Left ventricle myocardium inferior (tissue), 1 donor: ENCODE measurements at regions of chr20 and their contacts with region 1.

Region 1: DNA sequence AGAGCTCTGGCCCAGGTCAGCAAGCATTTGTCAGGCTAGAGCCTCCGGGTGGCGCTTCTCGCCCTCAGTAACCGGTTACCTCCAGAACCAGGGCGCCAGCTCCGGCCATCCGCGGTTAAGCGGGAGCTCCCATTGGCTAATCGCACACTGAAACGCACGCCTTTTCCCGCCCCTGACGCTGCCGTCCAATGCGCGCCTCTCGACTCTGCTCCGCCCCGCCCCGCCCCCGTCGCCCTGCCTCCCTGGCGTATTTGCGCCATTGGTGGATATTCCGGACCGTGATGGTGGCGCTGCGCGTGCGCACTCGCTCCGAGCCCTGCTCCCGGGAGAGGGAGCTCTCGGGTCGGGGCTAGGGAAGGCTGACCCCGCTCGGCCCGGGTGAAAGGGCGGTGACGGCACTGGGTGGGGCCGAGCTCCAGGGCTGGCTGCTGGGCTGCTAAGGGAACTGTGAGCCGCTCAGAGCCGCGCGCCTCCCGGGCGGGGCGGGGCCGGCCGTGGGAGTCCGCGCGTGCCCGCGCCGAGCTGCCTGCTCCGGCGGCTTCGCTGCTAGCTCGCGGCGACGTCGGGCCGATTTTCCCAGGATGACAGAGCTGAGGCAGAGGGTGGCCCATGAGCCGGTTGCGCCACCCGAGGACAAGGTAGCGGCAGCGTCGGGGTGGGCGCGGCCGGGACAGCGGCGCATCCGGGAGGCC is at the start of gene CDS2:
- DNase-seq: peak; percentile 100
- H3K4me3 ChIP-seq: peak within 1 kb of the TSS; percentile 85
- H3K27ac ChIP-seq: peak within 1 kb of the TSS; percentile 97
- H3K4me1 ChIP-seq: peaks cover 71% of the 10 kb centered on the region
- H3K27me3 ChIP-seq: no peaks in the 10 kb centered on the region
- CTCF ChIP-seq: peak; percentile 82
- total RNA-seq, gene CDS2: 79.0 TPM

Region 2: GRCh38 chr20:5191829-5192569 is 65.3 kb after region 1 on chr20:
- intact Hi-C with region 1: loop called (anchors 5 kb)
- DNase-seq: no peak
- H3K4me3 ChIP-seq: no peak overlapping the region
- H3K27ac ChIP-seq: peak overlapping the region; percentile 74
- H3K4me1 ChIP-seq: peaks cover 36% of the 10 kb centered on the region
- H3K27me3 ChIP-seq: no peaks in the 10 kb centered on the region
- CTCF ChIP-seq: peak; percentile 84